ENCODE measurements at regions of chr6 and their contacts with region 1.

Region 1: DNA sequence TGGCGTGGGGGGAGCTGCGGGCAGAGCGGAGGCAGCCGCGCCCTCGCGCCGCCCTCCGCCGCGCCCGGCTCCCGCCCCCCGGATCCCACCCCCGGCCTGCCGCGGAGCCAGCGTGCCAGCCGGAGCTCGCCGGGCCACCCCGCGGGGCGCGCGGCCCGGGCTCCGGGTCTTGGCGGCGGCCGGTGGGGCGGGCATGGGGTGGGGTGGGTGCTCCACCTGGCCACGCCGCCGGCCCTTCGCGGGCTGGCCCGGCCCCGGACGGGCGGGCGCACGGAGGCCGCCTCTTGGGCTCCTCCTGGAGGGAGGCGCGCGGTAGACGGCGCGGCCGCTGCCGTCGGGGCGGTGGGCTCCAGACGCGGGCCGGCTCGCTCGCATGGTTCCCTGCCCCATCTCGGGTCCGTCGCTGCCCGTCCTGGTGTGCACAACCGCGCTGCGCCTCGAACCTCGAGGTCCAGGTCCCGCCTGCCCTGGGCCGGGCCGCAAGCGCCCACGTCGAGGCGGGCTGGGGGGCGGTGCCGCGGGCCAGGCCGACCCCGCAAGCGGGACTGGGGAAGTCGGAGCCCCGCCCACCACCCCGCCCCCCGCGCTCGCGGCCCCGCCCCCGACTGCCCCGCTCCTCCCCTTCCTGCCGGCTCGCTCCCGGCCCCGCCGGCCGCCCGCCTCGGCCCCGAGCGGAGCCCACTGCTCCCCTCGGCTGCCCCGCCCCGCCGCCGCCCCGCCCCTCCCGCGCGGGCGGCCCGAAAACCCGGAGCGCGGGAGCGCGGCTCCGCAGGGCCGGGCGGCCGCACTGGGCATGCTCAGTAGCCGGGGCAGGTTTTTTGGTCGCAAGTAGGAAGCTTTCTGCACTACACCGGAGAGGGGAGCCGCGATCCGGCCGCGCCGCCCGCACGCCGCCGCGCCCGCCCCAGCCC is at the start of gene CDYL:
- DNase-seq: peak; percentile 75 to 85
- ATAC-seq: peak; percentile 86
- H3K4me3 ChIP-seq: peak within 1 kb of the TSS; percentile 62 to 82 (median 72)
- H3K27ac ChIP-seq: peak within 1 kb of the TSS; percentile 72 to 83 (median 78)
- H3K4me1 ChIP-seq: peaks cover 18 to 21% of the 10 kb centered on the region in 2 donors
- H3K27me3 ChIP-seq: no peaks in the 10 kb centered on the region
- CTCF ChIP-seq: peak in 1 of 5 experiments; percentile 34
- POLR2A ChIP-seq: peak; percentile 55
- total RNA-seq, gene CDYL: 24.1 to 24.8 (median 24.5) TPM

Region 2: DNA sequence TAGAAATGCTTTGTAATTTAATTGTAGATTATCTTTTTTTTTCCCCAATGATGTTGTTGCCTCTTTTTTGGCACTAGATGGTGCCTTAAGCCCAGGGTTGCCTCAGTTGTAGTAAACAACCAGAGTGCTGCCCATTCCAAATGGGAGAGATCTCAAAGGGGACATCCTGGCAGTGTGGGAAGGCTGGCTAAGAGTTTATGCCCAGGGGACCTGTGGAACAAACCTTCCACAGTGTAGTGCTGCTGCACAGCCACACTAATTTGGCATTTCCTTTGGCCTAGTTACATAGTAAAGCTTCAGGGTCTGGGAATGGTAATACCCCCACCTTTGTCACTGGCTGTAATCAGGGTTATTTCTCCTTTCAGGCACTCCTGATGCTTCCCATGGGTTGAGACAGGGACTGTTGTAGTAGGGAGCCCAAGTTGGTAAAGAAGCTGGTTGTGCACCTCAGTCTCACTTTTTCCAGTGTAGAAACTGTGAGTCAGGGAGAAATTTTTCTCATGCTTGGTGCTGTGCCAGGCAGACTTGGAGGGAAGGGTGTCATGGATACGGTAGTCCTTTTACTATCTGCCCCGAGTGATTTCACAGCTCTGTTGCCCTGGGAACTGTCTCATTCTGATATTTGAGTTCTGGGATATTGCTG is 462.7 kb before region 1 on chr6:
- in situ Hi-C with region 1: no loop called
- intact Hi-C with region 1: loop called (anchors 10 kb)
- DNase-seq: no peak
- ATAC-seq: peak in 1 of 2 donors; percentile 74
- H3K4me3 ChIP-seq: no peak overlapping the region
- H3K27ac ChIP-seq: peak overlapping the region in 2 of 4 donors; percentile 17 to 27
- H3K4me1 ChIP-seq: peaks cover 13 to 17% of the 10 kb centered on the region in 2 donors
- H3K27me3 ChIP-seq: no peaks in the 10 kb centered on the region
- CTCF ChIP-seq: peak in 3 of 5 experiments; percentile 32 to 49 (median 41)
- POLR2A ChIP-seq: no peak

Region 3: GRCh38 chr6:4358414-4359114 is 417.3 kb before region 1 on chr6:
- in situ Hi-C with region 1: no loop called
- intact Hi-C with region 1: loop called (anchors 10 kb)
- DNase-seq: peak; percentile 96 to 99
- ATAC-seq: peak; percentile 91 to 96
- H3K4me3 ChIP-seq: peak overlapping the region in 3 of 4 donors; percentile 14 to 26 (median 20)
- H3K27ac ChIP-seq: peak overlapping the region; percentile 93 to 99 (median 94)
- H3K4me1 ChIP-seq: peaks cover 8 to 13% of the 10 kb centered on the region in 2 donors
- H3K27me3 ChIP-seq: no peaks in the 10 kb centered on the region
- CTCF ChIP-seq: no peak
- POLR2A ChIP-seq: peak; percentile 46 to 84

Region 4: GRCh38 chr6:4647414-4648365 is 128.1 kb before region 1 on chr6:
- in situ Hi-C with region 1: no loop called
- intact Hi-C with region 1: loop called (anchors 1 kb)
- DNase-seq: peak; percentile 80 to 85
- ATAC-seq: peak; percentile 96
- H3K4me3 ChIP-seq: peak overlapping the region; percentile 44 to 56 (median 50)
- H3K27ac ChIP-seq: peak overlapping the region; percentile 80 to 85 (median 84)
- H3K4me1 ChIP-seq: peaks cover 4 to 6% of the 10 kb centered on the region in 2 donors
- H3K27me3 ChIP-seq: no peaks in the 10 kb centered on the region
- CTCF ChIP-seq: peak in 1 of 5 experiments; percentile 10
- POLR2A ChIP-seq: peak; percentile 64 to 70

Region 5: GRCh38 chr6:4936681-4937041 is 160.8 kb after region 1 on chr6:
- in situ Hi-C with region 1: no loop called
- intact Hi-C with region 1: loop called (anchors 5 kb)
- DNase-seq: no peak
- ATAC-seq: no peak
- H3K4me3 ChIP-seq: no peak overlapping the region
- H3K27ac ChIP-seq: no peak overlapping the region
- H3K4me1 ChIP-seq: peaks cover 12 to 22% of the 10 kb centered on the region in 2 donors
- H3K27me3 ChIP-seq: no peaks in the 10 kb centered on the region
- CTCF ChIP-seq: peak; percentile 36 to 67 (median 59)
- POLR2A ChIP-seq: no peak

Region 6: DNA sequence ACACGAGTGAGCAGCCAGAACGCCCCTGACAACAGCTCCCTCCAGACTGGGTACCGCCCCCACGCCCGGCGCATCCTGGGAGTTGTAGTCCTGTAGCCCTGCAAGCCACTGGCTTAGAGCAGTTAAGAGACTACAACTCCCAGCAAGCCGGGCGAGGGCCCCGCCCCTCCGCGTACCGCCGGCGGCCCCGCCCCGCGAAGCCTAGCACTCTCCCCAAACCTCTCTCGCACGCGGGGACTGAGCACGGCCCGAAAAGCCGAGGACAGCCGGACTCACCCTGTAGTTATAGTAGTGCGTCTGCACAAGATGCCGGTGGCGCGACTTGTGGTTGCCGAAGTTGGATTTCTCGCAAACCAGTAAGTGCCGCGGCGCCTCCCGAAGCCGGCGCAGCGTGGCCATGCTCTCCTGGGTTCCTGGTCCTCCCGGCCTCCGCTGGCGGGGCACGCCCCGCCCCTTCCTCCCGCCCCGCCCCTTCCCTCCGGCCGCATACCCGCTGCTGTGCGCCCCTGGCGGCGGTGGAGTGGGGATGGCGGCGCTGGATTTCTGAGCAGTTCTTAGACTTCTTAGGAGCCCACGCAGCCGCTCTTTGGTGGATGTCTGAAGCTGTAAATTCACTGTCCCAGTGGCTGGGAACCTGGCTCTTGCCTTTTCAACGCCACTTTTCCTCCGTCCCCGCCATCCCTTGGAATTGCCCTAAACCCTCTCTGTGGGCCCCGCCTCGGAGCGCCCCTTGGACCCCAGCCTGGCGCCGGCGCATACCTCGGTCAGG is 227.9 kb after region 1 on chr6 and contains the start of gene RPP40:
- in situ Hi-C with region 1: no loop called
- intact Hi-C with region 1: loop called (anchors 5 kb)
- DNase-seq: peak; percentile 93 to 95
- ATAC-seq: peak; percentile 99
- H3K4me3 ChIP-seq: peak within 1 kb of the TSS; percentile 67 to 83 (median 76)
- H3K27ac ChIP-seq: peak within 1 kb of the TSS; percentile 87 to 90 (median 88)
- H3K4me1 ChIP-seq: peaks cover 5 to 7% of the 10 kb centered on the region in 2 donors
- H3K27me3 ChIP-seq: no peaks in the 10 kb centered on the region
- CTCF ChIP-seq: peak; percentile 72 to 97 (median 82)
- POLR2A ChIP-seq: peak in 1 of 2 donors; percentile 38
- total RNA-seq, gene RPP40: 5.1 to 16.4 (median 12.2) TPM

Region 7: GRCh38 chr6:5260661-5261544 is 485.1 kb after region 1 on chr6 and contains the starts of genes FARS2 and LYRM4:
- in situ Hi-C with region 1: no loop called
- intact Hi-C with region 1: loop called (anchors 2 kb)
- DNase-seq: peak; percentile 64 to 81
- ATAC-seq: peak; percentile 93 to 94
- H3K4me3 ChIP-seq: peak within 1 kb of the TSS; percentile 58 to 97 (median 86)
- H3K27ac ChIP-seq: peak within 1 kb of the TSS; percentile 85 to 99 (median 94)
- H3K4me1 ChIP-seq: peaks cover 15 to 24% of the 10 kb centered on the region in 2 donors
- H3K27me3 ChIP-seq: no peaks in the 10 kb centered on the region
- CTCF ChIP-seq: peak in 2 of 5 experiments; percentile 36 to 45
- POLR2A ChIP-seq: peak; percentile 60 to 68
- total RNA-seq, gene FARS2: 13.6 to 24.0 (median 15.8) TPM
- total RNA-seq, gene LYRM4: 8.4 to 20.1 (median 12.2) TPM